HAP-1 (cell line): ENCODE measurements at regions of chr13 and their contacts with region 1.

Region 1: DNA sequence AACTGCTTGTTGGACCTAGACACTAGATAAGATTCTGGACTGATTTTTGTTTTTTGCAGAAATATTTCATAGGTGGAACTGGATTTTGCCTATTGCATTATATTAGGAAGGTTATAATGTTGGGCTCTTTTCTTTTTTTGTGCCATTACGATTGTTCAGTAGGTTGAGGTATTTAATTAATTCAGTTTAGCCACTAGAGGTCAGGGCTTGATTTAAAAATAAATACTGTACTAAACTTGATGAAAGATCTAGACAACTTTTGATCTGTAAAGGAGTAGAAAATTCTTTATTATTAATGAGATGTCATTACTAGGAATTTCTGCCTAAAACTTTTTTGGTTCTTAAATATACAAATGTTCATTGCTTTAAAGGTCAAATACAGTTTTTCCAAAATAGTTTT is 15.2 kb upstream of the SUPT20H start:
- DNase-seq: peak in 1 of 2 experiments; percentile 31
- H3K4me3 ChIP-seq: no peak overlapping the region
- H3K4me1 ChIP-seq: no peaks in the 10 kb centered on the region
- H3K27me3 ChIP-seq: no peaks in the 10 kb centered on the region

Region 2: DNA sequence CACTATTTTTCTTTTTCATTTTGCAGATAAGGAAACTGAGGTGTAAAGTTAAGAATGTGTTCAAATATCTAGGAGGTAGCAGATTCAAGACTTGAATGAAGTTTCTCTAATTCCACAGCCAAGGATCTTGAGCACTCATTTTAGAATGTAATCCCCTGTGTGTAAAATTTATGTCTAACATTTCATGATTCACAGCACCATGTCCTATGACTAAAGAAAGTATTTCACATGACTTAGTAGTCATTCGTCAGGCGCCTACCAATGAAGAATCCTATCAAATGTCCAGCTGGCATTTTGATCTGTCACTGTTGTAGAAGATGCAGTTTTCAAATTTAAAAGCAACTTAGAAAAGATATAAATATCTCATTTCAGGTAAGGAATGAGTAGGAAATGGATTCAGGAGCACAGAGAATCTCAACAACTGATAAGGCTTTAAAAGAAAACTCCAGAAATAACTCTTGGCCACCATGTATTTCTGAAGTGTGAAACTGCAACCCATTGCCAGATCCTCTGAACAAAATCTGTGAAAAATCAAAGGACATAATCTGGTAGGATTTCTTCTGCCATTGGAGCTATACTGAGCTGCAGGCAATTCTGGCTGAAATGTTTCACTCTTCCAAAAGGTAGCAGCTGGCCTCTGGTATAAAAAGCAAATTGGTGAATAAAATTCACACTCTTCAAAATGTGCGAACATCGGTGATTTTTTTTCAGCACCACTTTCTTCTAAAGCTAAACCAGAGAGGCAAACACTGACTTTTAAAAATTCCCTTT is 1035.7 kb before region 1 on chr13:
- in situ Hi-C with region 1: no loop called
- DNase-seq: no peak
- H3K4me3 ChIP-seq: no peak overlapping the region
- H3K4me1 ChIP-seq: peaks cover 2% of the 10 kb centered on the region; the same call in 1 of the 2 replicates
- H3K27me3 ChIP-seq: no peaks in the 10 kb centered on the region

Region 3: DNA sequence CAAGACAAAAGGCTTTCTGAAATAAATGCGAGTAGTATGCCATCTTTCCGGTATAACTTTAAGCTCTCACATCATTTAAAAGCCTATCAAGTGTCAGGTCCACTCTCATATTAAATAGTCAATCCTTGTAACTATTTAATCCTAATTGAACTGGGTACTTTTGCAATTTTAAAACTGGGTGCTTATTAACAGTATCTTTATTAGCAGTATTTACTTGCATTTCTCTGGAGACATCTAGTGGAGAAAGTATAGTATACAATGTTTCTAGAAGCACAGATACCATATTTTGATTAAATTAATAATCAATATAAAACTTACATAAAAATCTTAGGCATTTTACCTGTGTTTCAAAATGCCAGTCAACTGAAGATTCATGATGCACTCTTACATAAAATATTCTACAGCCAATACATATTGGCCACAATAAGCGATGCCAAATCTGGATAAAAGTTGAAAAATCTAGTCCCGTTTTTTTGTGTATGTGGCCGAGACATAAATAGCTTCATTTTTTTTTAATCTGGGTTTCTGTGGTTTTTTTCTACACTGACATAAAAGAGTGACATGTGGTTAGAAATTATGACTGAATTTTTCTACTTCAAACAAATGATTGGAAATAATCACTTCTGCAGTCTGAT is 528.2 kb after region 1 on chr13:
- in situ Hi-C with region 1: loop called (anchors 25 kb)
- DNase-seq: peak in 1 of 2 experiments; percentile 52
- H3K4me3 ChIP-seq: no peak overlapping the region
- H3K4me1 ChIP-seq: peaks cover 25% of the 10 kb centered on the region
- H3K27me3 ChIP-seq: peaks cover 5% of the 10 kb centered on the region; the same call in 1 of the 2 replicates